HEK293T (cell line): ENCODE measurements at regions of chr4 and their contacts with region 1.

Region 1: DNA sequence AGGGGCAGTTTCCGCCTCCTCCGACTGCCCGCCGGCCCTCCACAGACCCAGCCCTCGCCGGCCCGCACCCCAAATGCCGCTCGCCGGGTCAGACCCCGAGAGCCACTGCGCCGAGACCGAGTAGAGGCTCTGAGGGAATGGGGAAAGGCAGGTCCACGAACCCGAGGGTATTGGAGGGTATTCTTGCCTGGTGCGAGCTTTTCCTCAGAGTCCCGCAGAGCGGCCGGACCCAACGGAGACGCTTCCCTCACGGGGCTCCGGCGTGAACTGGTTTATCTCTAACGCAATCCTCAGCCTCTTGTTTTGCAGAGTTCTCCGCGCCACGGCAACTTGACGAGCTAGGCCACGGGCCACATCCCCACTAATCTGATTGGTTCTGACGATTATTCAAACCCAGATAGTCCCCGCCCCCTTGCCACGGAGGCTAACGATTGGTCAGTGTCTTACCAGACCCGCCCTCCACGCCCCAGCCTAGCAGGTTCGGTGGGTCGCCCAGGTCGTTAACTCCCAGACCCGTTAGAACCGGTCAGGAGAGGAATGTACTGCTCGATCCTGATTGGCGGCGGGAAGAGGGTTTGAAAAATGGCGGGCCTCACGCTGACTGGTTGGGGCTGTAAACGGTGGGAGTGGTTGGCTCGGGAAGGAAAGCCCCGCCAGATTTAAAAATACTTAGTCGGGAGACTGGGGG is at the start of gene HMGB2:
- DNase-seq: peak; percentile 94

Region 2: DNA sequence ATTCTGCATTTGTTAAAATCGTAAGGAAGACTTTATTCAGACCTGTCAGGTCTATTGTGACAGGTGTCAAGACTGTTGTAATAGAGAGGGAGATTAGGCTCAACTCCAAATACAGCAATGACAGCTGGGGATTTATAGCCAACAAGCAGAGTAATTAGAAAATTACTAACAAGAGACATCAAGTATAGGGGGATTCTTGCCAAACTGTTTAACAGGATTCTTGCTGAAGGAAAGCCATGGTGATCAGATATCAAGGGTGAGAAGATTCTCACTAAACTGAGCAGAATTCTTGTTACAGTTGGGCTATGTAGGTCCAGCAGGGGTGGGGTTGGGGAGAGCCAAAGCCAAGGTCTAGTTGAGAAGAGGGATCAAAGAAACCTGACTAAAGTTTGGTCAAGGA is 626.6 kb before region 1 on chr4:
- CTCF ChIA-PET with region 1: no interaction called
- POLR2A ChIA-PET with region 1: no interaction called
- DNase-seq: no peak

Region 3: DNA sequence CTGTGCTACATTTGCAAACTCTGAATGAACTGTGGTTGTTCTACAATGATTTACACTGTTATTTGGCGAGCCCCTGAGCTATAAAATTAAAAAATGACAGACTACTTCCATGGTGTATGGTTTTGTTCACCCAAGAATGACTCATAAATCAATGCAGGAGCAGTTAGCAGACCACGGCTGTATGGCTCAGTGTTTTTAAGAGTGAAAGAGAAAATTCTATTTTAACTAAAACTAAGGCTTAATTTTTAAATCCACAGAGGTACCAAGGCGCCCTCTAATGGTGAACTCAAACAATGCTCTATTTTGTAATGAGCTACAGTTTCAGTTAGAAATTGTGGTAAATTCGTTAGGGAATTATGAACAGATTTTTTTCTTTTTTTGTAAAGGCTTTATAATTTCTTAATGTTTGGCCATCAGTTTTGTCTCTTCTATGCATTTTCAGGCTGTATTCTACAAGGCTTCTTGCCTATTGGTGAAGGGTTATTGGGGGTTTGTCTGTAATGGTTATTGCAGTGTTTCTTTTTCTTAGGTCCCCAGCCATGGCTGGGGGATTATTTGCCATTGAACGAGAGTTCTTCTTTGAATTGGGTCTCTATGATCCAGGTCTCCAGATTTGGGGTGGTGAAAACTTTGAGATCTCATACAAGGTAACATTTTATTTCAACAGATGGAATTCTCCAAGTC is 32.6 kb before region 1 on chr4:
- CTCF ChIA-PET with region 1: interaction called, 6 read pairs
- POLR2A ChIA-PET with region 1: interaction called, 14 read pairs
- DNase-seq: no peak

Region 4: DNA sequence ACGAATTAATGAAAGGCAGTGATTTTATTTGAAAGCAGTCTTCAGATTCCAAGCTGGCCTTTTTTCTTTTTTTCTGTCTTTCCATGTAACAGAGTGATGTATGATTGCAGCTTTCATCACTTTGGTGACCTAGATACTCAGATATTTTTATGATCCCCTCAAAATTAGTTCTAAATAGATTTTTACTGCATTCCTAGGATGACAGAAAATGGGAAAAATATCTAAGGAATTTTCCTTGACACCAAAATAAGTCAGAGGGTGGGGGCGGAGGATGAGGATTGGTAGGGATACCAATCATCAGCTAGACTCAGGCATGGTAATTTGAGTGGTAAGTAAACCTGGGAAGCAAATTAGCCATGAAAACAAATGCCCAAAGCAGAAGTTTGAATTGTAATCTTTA is 11.8 kb after region 1 on chr4:
- CTCF ChIA-PET with region 1: no interaction called
- POLR2A ChIA-PET with region 1: interaction called, 59 read pairs
- DNase-seq: no peak

Region 5: GRCh38 chr4:173370477-173371291 is 36.5 kb after region 1 on chr4 and contains the start of gene SAP30:
- CTCF ChIA-PET with region 1: interaction called, 4 read pairs
- POLR2A ChIA-PET with region 1: interaction called, 317 read pairs
- DNase-seq: peak; percentile 92

Region 6: GRCh38 chr4:173403051-173403450 is 68.8 kb after region 1 on chr4:
- CTCF ChIA-PET with region 1: no interaction called
- POLR2A ChIA-PET with region 1: interaction called, 17 read pairs
- DNase-seq: no peak

Region 7: DNA sequence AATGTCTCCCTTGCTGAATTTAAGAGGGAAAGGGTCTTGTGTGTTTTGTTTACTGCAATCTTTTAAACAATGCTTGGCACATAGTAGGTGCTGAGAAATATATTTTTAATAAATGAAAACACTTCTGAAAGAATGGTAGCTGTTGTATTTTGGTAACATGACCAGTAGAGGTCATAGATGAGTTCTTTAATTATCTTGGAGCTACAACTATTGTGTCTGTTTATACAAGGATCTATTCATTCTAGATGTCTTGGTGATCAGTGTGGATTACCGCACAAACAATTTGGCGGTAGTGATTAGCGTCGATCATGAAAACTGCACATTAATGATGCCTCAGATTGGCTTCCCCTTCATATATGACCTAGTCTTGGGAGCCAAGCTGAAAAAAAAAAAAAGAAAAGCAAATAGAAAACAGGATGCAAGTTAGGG is 86.1 kb after region 1 on chr4:
- CTCF ChIA-PET with region 1: interaction called, 3 read pairs
- POLR2A ChIA-PET with region 1: interaction called, 11 read pairs
- DNase-seq: peak; percentile 30